ENCODE measurements at regions of chr2 and their contacts with region 1.

Region 1: DNA sequence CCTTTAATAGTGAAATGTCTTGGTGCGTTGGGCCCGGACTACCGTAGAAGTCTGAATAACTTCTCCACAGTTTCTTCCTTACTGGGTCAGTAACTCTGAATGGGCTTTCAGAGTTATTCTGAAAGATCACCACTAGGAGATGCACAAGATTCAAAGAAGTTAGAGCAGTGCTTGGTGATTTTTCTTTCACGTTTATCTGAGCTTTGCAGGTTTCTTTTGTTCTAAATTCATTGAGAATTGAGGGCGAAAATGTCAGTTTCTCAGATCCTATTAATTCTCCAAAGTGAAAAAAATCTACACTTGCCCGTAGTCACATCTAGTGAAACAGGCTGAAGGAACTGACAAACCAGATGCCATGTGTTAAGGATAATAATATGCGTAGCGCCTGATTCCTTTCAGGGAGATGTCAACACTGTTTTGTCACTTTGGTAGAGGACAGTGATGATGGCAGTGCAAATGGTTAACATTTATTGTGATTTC is 70.1 kb downstream of the QPCT start:
- DNase-seq: peak; percentile 77

Region 2: GRCh38 chr2:37250869-37251740 is 163.4 kb before region 1 on chr2:
- in situ Hi-C with region 1: no loop called
- DNase-seq: no peak

Region 3: DNA sequence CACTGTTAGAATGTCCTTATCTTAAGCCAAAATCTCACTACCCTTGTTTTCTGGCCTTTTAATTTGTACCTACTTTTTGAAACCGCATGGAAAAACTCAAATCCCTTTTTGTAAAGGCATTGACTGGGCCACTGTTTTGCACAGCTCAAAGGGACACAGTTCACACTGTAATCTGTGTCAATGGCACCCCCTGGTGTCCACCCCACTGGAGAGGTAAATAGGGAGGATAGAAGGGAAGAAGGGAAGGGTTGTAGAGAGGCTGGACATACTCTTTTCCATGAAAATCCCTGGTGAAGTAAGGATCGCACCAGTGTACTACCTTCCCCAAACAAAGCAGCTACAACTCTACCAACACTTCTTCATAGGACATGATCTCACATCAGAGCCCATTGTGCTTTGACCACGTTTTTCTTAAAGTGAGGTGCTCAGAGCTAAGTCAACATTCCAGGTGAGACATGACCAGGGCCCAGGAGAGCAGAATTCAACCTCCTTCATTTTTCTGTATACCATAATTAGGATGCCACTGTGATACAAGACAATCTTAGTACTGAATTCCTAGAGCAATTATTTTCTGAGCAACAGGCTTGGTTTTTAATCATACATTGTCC is 418.2 kb after region 1 on chr2:
- in situ Hi-C with region 1: loop called (anchors 25 kb)
- DNase-seq: peak; percentile 88

Region 4: DNA sequence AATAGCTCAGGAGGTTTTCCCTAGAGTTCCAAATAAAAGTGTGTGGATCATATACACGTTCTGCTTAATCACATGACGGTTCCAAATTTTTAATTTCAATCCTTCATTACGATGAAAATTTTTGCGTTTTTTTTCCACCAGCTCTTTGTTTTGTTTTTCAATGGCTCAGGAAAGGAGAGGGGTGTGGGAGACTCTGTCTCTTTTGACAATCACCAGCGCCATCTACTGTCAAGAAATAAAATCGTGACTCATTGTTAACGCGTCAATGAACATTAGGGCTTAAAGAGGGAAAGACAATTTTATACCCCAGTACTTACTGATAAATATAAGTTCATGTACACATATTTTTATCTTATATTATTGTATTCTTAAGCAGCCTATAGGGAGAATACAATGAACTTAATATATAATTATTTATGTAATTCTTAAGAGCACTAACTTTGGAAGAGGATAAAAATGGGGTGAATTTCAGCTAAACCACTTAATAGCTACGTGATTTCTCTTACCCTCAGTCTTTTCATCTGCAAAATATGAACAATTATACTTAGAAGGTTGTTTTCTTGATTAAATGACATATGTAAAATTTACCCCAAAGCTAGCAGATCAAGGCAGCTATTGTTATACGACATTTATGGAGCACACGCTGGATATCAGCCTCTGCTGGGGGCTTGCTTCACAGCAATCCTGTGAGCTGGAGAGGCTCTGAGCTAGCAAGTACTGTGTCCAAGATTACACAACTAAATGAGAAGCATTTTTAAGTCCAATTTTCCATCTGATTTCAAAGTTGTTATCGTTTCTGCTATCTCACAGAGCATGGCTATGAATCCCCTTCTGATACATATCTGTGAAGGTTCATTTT is 463.2 kb after region 1 on chr2:
- in situ Hi-C with region 1: no loop called
- DNase-seq: peak; percentile 77